ENCODE measurements at regions of chr7 and their contacts with region 1.

Region 1: GRCh38 chr7:122847871-122848473 is 38.3 kb downstream of the CADPS2 start:
- DNase-seq: peak in 2 of 5 donors; percentile 20 to 29
- ATAC-seq: peak; percentile 72 to 91 (median 80)
- H3K4me3 ChIP-seq: no peak overlapping the region
- H3K27ac ChIP-seq: peak overlapping the region in 10 of 12 donors; percentile 50 to 80 (median 60)
- H3K4me1 ChIP-seq: peaks cover 0 to 24% (median 6%) of the 10 kb centered on the region in 12 donors
- H3K27me3 ChIP-seq: no peaks in the 10 kb centered on the region
- CTCF ChIP-seq: no peak
- POLR2A ChIP-seq: no peak

Region 2: GRCh38 chr7:122803323-122803722 is 44.6 kb before region 1 on chr7:
- intact Hi-C with region 1: loop called in 2 of 10 experiments (anchors 2 to 5 kb)
- DNase-seq: no peak
- ATAC-seq: peak in 2 of 4 donors; percentile 19 to 66
- H3K4me3 ChIP-seq: no peak overlapping the region
- H3K27ac ChIP-seq: peak overlapping the region in 11 of 12 donors; percentile 22 to 80 (median 72)
- H3K4me1 ChIP-seq: peaks cover 0 to 34% (median 10%) of the 10 kb centered on the region in 12 donors
- H3K27me3 ChIP-seq: no peaks in the 10 kb centered on the region
- CTCF ChIP-seq: peak; percentile 30 to 72 (median 51)
- POLR2A ChIP-seq: no peak

Region 3: GRCh38 chr7:122886357-122887081 is 38.5 kb after region 1 on chr7 and contains the start of gene CADPS2:
- intact Hi-C with region 1: no loop called
- DNase-seq: peak; percentile 87 to 90 (median 88)
- ATAC-seq: peak; percentile 82 to 96 (median 94)
- H3K4me3 ChIP-seq: peak within 1 kb of the TSS; percentile 63 to 91 (median 84)
- H3K27ac ChIP-seq: peak within 1 kb of the TSS; percentile 85 to 95 (median 91)
- H3K4me1 ChIP-seq: peaks cover 0 to 27% (median 6%) of the 10 kb centered on the region in 12 donors
- H3K27me3 ChIP-seq: peaks cover 0 to 33% (median 0%) of the 10 kb centered on the region in 9 donors
- CTCF ChIP-seq: peak in 7 of 12 donors; percentile 6 to 38 (median 33)
- POLR2A ChIP-seq: peak in 1 of 2 donors; percentile 83
- total RNA-seq, gene CADPS2: 6.5 to 29.0 (median 10.3) TPM